ENCODE measurements at regions of chr16 and their contacts with region 1.

Region 1: DNA sequence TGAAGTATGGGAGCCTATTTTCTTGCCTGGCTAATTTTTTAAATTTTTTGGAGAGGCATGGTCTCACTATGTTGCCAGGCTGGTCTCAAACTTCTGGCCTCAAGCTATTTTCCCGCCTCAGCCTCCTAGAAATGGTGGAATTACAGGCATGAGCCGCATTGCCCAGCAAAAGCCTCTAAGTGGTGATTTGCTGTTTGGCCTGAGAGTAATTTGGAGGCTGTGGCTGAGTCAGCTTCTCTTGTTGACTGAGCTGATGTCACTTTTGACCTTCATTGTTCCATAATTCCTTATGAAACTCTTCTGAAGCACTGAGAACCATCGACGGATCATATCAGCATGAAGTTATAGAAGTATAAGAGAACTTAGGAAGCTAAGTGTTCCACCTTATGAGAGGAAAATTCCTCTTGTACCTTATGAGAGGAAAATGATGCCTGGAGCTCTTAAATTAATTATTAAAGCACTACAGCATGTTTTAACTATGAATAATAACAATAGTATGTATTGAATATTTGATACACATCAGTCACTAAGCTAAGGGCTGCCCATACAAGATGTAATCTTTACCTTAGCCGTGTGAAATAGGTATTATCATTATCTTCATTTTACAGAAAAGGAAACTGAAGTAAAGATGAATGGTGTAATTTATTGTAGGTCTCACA is 220.8 kb upstream of the MON1B start:
- DNase-seq: peak; percentile 41
- H3K4me3 Mint-ChIP-seq: no peak overlapping the region
- H3K27ac Mint-ChIP-seq: peak overlapping the region; percentile 77
- H3K4me1 Mint-ChIP-seq: peaks cover 11% of the 10 kb centered on the region
- H3K27me3 Mint-ChIP-seq: no peaks in the 10 kb centered on the region
- CTCF ChIP-seq: no peak

Region 2: GRCh38 chr16:76676356-76676755 is 293.9 kb before region 1 on chr16:
- CTCF ChIA-PET with region 1: no interaction called
- intact Hi-C with region 1: loop called (anchors 1 kb)
- DNase-seq: peak; percentile 84
- H3K4me3 Mint-ChIP-seq: peak overlapping the region; percentile 57
- H3K27ac Mint-ChIP-seq: peak overlapping the region; percentile 99
- H3K4me1 Mint-ChIP-seq: peaks cover 43% of the 10 kb centered on the region
- H3K27me3 Mint-ChIP-seq: no peaks in the 10 kb centered on the region
- CTCF ChIP-seq: no peak

Region 3: GRCh38 chr16:76906552-76906951 is 63.7 kb before region 1 on chr16:
- CTCF ChIA-PET with region 1: no interaction called
- intact Hi-C with region 1: loop called (anchors 5 kb)
- DNase-seq: no peak
- H3K4me3 Mint-ChIP-seq: no peak overlapping the region
- H3K27ac Mint-ChIP-seq: no peak overlapping the region
- H3K4me1 Mint-ChIP-seq: peaks cover 14% of the 10 kb centered on the region
- H3K27me3 Mint-ChIP-seq: no peaks in the 10 kb centered on the region
- CTCF ChIP-seq: no peak

Region 4: GRCh38 chr16:77002644-77003043 is 32.4 kb after region 1 on chr16:
- CTCF ChIA-PET with region 1: no interaction called
- intact Hi-C with region 1: no loop called
- DNase-seq: no peak
- H3K4me3 Mint-ChIP-seq: no peak overlapping the region
- H3K27ac Mint-ChIP-seq: no peak overlapping the region
- H3K4me1 Mint-ChIP-seq: no peaks in the 10 kb centered on the region
- H3K27me3 Mint-ChIP-seq: no peaks in the 10 kb centered on the region
- CTCF ChIP-seq: no peak

Measured in Calu3 (cell line).